Right cardiac atrium (tissue), 5 donors: ENCODE measurements at regions of chr9 and their contacts with region 1.

Region 1: GRCh38 chr9:100714372-100715099 is 136.7 kb downstream of the CAVIN4 start:
- DNase-seq: peak; percentile 50 to 72 (median 64)
- ATAC-seq: peak; percentile 57 to 69
- H3K4me3 ChIP-seq: no peak overlapping the region
- H3K27ac ChIP-seq: no peak overlapping the region
- H3K4me1 ChIP-seq: no peaks in the 10 kb centered on the region
- H3K27me3 ChIP-seq: no peaks in the 10 kb centered on the region

Region 2: GRCh38 chr9:100838857-100839256 is 124.3 kb after region 1 on chr9:
- intact Hi-C with region 1: no loop called
- DNase-seq: no peak
- ATAC-seq: no peak
- H3K4me3 ChIP-seq: no peak overlapping the region
- H3K27ac ChIP-seq: no peak overlapping the region
- H3K4me1 ChIP-seq: no peaks in the 10 kb centered on the region
- H3K27me3 ChIP-seq: no peaks in the 10 kb centered on the region

Region 3: GRCh38 chr9:101311758-101312420 is 597.4 kb after region 1 on chr9:
- intact Hi-C with region 1: loop called (anchors 5 to 10 kb)
- DNase-seq: no peak
- ATAC-seq: peak in 1 of 2 donors; percentile 40
- H3K4me3 ChIP-seq: no peak overlapping the region
- H3K27ac ChIP-seq: no peak overlapping the region
- H3K4me1 ChIP-seq: no peaks in the 10 kb centered on the region
- H3K27me3 ChIP-seq: no peaks in the 10 kb centered on the region